Spleen (tissue), 13 donors: ENCODE measurements at regions of chr13 and their contacts with region 1.

Region 1: DNA sequence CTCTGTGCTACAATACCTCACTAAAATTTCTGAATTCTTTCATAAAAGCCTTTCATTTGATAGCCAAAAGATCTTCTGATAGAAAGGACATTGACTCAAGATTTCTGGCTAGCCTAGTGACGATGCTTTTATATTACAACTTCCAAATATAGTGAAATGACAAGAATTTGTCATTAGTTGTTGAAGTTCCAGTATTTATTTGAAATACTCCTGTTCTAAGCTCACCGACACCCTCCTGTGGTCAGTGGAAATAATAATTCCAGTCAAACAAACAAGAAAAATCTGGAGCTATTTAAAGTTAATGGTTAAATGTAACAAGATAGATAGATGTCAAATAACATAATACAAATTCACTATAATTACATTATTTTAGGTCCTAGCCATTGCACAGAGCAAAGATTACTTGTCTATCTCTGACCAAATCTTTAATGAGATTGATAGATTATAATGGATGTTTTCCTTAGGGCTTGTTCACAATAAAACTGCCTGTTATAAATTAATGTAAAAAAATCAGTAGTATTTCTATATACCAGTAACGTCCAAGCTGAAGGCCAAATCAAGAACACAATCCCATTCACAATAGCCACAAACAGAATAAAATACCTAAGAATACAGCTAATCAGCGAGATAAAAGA is 195.5 kb downstream of the RGCC start:
- DNase-seq: no peak
- H3K4me3 ChIP-seq: no peak overlapping the region
- H3K27ac ChIP-seq: peak overlapping the region in 2 of 8 donors; percentile 4 to 31
- H3K4me1 ChIP-seq: peaks cover 0 to 22% (median 4%) of the 10 kb centered on the region in 6 donors
- H3K27me3 ChIP-seq: no peaks in the 10 kb centered on the region
- CTCF ChIP-seq: peak in 7 of 11 experiments; percentile 32 to 60 (median 41)
- POLR2A ChIP-seq: no peak

Region 2: GRCh38 chr13:41352935-41353840 is 299.7 kb before region 1 on chr13:
- intact Hi-C with region 1: loop called (anchors 10 kb)
- DNase-seq: no peak
- H3K4me3 ChIP-seq: no peak overlapping the region
- H3K27ac ChIP-seq: no peak overlapping the region
- H3K4me1 ChIP-seq: peaks cover 0 to 48% (median 27%) of the 10 kb centered on the region in 6 donors
- H3K27me3 ChIP-seq: no peaks in the 10 kb centered on the region
- CTCF ChIP-seq: peak; percentile 70 to 90 (median 86)
- POLR2A ChIP-seq: no peak

Region 3: DNA sequence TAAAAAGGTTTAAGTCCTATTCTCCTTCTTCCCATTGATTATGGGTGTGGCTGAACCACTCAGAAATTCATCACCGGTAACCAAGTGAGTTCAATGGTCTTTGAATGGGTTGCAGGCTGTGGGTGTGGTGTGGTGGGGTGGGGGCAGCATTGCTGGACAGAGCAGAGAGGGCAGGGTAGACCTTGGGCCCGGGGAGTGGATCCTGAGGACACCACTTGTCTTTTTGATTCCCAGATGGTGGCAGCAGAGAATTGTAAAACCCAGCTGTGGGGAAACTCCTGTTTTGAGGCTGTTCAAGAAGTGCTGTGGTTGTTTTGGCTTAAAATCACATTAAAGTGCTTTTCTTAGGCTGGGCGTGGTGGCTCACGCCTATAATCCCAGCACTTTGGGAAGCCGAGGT is 241.3 kb before region 1 on chr13:
- intact Hi-C with region 1: loop called (anchors 10 kb)
- DNase-seq: peak; percentile 54
- H3K4me3 ChIP-seq: no peak overlapping the region
- H3K27ac ChIP-seq: no peak overlapping the region
- H3K4me1 ChIP-seq: no peaks in the 10 kb centered on the region
- H3K27me3 ChIP-seq: no peaks in the 10 kb centered on the region
- CTCF ChIP-seq: peak in 1 of 11 experiments; percentile 23
- POLR2A ChIP-seq: no peak

Region 4: DNA sequence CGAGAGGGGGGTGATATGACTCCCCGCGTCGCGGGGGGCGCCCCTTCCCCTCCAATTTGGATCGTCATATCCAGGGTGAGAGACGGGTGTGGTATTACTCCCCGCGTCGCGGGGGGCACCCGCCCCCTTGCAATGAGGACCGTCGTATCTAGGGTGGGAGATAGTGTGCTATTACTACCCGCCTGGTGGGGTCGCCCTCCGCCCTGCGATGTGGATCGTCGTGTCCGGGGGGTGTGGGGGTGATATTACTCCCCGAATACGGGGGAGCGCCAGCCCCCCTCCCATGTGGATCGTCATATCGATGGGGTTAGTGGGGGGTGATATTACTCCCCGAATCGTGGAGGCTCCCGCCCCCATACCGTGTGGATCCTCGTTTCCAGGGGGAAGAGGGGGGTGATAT is 224.7 kb before region 1 on chr13:
- intact Hi-C with region 1: no loop called
- DNase-seq: peak; percentile 69
- H3K4me3 ChIP-seq: peak overlapping the region in 1 of 8 donors; percentile 17
- H3K27ac ChIP-seq: no peak overlapping the region
- H3K4me1 ChIP-seq: peaks cover 0 to 12% (median 0%) of the 10 kb centered on the region in 6 donors
- H3K27me3 ChIP-seq: peaks cover 0 to 23% (median 0%) of the 10 kb centered on the region in 7 donors
- CTCF ChIP-seq: peak in 3 of 11 experiments; percentile 14 to 37 (median 15)
- POLR2A ChIP-seq: no peak

Region 5: GRCh38 chr13:41603917-41604316 is 48.9 kb before region 1 on chr13:
- intact Hi-C with region 1: no loop called
- DNase-seq: no peak
- H3K4me3 ChIP-seq: no peak overlapping the region
- H3K27ac ChIP-seq: no peak overlapping the region
- H3K4me1 ChIP-seq: no peaks in the 10 kb centered on the region
- H3K27me3 ChIP-seq: no peaks in the 10 kb centered on the region
- CTCF ChIP-seq: no peak
- POLR2A ChIP-seq: no peak